Endothelial cell of umbilical vein (primary cell): ENCODE measurements at regions of chr2 and their contacts with region 1.

Region 1: GRCh38 chr2:195945061-195945460 is 123.6 kb downstream of the DNAH7 start:
- DNase-seq: no peak
- H3K4me3 ChIP-seq: no peak overlapping the region
- H3K27ac ChIP-seq: no peak overlapping the region
- H3K4me1 ChIP-seq: no peaks in the 10 kb centered on the region
- H3K27me3 ChIP-seq: peaks cover 0 to 4% of the 10 kb centered on the region in 2 experiments
- CTCF ChIP-seq: no peak
- POLR2A ChIP-seq: no peak

Region 2: GRCh38 chr2:195498176-195498575 is 446.9 kb before region 1 on chr2:
- CTCF ChIA-PET with region 1: interaction called, 10 read pairs
- POLR2A ChIA-PET with region 1: no interaction called
- dilution Hi-C with region 1: no loop called
- intact Hi-C with region 1: no loop called
- DNase-seq: peak; percentile 38
- H3K4me3 ChIP-seq: no peak overlapping the region
- H3K27ac ChIP-seq: no peak overlapping the region
- H3K4me1 ChIP-seq: no peaks in the 10 kb centered on the region
- H3K27me3 ChIP-seq: no peaks in the 10 kb centered on the region
- CTCF ChIP-seq: peak in 1 of 2 donors; percentile 23
- POLR2A ChIP-seq: no peak